ENCODE measurements at regions of chr2 and their contacts with region 1.

Region 1: DNA sequence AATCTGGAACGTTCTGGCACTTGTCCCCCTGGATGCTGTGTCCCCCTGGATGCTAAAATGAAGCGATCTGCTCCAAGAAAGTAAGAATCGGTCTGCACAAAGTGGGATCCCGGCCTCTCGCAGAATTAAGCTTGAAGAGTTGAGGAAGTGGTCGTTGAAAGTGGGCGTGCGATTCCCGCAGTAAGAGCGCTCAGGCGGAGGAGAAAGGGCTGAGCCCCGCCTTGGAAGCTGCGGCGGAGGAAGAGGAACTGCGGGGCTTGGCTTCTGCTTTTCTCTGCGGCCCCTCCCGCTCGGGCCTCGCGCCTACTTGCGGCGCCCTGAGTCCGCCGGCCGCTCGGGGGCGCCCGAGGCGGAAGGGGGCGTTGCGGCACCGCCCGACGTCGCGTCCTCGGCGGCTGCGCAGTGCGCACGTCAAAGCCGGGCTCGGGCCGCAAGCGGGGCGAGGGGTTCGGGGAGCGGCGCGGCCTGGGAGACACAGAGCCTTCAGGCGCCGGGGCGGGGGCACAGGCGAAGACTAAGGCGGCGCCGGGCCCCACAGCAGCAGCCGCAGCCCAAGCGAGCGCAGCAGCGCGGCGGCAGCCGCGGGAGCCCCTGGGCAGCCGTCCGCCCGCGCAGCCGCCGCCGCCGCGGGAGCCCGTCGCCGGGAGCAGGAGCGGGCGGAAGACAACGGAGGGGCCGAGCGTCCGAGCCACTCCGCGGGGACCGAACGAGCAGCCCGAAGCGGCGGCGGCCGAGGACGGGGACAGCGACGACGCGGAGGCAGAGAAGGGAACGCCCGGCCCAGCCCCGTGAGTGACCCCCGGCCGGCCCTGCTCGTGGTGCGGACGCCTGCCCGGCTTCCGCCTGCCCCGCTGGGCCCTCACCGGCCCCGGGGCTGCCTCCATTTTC is at the start of gene CAB39:
- DNase-seq: peak; percentile 86
- H3K4me3 Mint-ChIP-seq: peak within 1 kb of the TSS; percentile 82
- H3K27ac Mint-ChIP-seq: peak within 1 kb of the TSS; percentile 81
- H3K4me1 Mint-ChIP-seq: peaks cover 22% of the 10 kb centered on the region
- H3K27me3 Mint-ChIP-seq: no peaks in the 10 kb centered on the region
- CTCF ChIP-seq: peak; percentile 43
- total RNA-seq, gene CAB39: 76.9 and 91.7 TPM in 2 replicates

Region 2: GRCh38 chr2:230394301-230394700 is 318.4 kb before region 1 on chr2:
- CTCF ChIA-PET with region 1: no interaction called
- POLR2A ChIA-PET with region 1: no interaction called
- intact Hi-C with region 1: no loop called
- DNase-seq: no peak
- H3K4me3 Mint-ChIP-seq: no peak overlapping the region
- H3K27ac Mint-ChIP-seq: no peak overlapping the region
- H3K4me1 Mint-ChIP-seq: no peaks in the 10 kb centered on the region
- H3K27me3 Mint-ChIP-seq: no peaks in the 10 kb centered on the region
- CTCF ChIP-seq: no peak

Region 3: GRCh38 chr2:230614913-230615332 is 97.8 kb before region 1 on chr2:
- CTCF ChIA-PET with region 1: interaction called, 4 read pairs
- POLR2A ChIA-PET with region 1: interaction called, 16 read pairs
- intact Hi-C with region 1: loop called (anchors 2 kb)
- DNase-seq: peak; percentile 58
- H3K4me3 Mint-ChIP-seq: no peak overlapping the region
- H3K27ac Mint-ChIP-seq: no peak overlapping the region
- H3K4me1 Mint-ChIP-seq: peaks cover 7% of the 10 kb centered on the region
- H3K27me3 Mint-ChIP-seq: no peaks in the 10 kb centered on the region
- CTCF ChIP-seq: no peak

Region 4: DNA sequence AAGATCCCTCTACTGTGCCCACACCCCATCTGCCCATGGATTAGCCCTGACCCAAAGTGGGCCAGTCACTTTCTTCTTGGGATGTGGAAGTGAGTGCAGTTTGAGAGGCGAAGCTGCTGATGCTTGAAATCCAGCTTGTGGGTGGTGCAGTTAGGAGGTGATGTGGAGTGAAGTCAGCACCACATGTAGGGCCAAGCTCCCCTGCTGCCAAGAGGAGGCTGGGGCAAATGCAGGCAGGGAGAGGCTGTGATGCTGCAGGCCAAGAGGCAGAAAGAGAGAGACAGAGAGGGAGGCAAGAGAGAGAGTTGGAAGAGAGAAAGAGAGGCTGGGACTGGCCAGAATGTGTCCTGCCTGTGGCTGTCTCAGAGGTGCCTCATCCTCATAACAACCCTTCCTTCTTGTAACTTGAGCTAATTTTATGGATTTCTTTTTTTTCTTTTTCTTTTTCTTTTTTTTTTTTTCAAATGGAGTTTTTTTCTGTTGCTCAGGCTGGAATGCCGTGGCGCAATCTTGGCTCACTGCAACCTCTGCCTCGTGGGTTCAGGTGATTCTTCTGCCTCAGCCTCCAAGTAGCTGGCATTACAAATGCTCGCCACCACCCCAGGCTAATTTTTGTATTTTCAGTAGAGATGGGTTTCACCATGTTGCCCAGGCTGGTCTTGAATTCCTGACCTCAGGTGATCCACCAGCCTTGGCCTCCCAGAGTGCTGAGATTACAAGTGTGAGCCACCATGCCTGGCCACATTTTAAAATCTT is 35.3 kb before region 1 on chr2:
- CTCF ChIA-PET with region 1: no interaction called
- POLR2A ChIA-PET with region 1: interaction called, 19 read pairs
- intact Hi-C with region 1: no loop called
- DNase-seq: peak; percentile 53
- H3K4me3 Mint-ChIP-seq: no peak overlapping the region
- H3K27ac Mint-ChIP-seq: peak overlapping the region; percentile 10
- H3K4me1 Mint-ChIP-seq: peaks cover 24% of the 10 kb centered on the region
- H3K27me3 Mint-ChIP-seq: no peaks in the 10 kb centered on the region
- CTCF ChIP-seq: no peak

Region 5: GRCh38 chr2:230737791-230738226 is 25.1 kb after region 1 on chr2:
- CTCF ChIA-PET with region 1: interaction called, 7 read pairs
- POLR2A ChIA-PET with region 1: interaction called, 16 read pairs
- intact Hi-C with region 1: no loop called
- DNase-seq: no peak
- H3K4me3 Mint-ChIP-seq: no peak overlapping the region
- H3K27ac Mint-ChIP-seq: peak overlapping the region; percentile 76
- H3K4me1 Mint-ChIP-seq: peaks cover 33% of the 10 kb centered on the region
- H3K27me3 Mint-ChIP-seq: no peaks in the 10 kb centered on the region
- CTCF ChIP-seq: no peak

Region 6: DNA sequence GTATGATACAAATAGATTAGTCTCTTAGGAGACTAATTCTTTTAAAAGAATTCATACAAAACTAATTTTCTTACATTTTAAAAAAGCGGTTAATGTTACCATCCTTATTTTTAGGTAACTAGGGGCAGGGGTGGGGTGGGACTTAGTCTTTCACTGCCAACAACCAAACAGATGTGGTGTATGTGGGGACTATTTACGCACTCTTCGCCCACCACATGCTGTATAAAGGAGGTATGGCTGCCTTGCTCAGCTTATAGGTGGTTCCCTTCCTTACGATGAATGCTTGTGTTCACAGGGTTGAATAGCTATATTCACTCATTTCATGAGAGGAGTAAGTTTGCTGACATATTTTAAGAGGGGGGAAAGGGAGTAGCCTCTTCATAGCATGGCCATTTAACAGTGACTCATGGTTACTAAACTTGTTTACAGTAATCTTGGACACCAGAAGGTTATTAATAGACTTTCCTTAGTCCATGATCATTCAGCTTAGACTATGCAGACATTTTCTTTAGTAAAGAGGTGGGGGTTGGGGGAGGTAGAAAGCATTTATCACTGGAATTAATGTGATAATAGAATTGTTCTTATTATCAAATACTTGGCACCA is 61.8 kb after region 1 on chr2:
- CTCF ChIA-PET with region 1: interaction called, 16 read pairs
- POLR2A ChIA-PET with region 1: interaction called, 138 read pairs
- intact Hi-C with region 1: no loop called
- DNase-seq: peak; percentile 75
- H3K4me3 Mint-ChIP-seq: peak overlapping the region; percentile 13
- H3K27ac Mint-ChIP-seq: peak overlapping the region; percentile 87
- H3K4me1 Mint-ChIP-seq: peaks cover 47% of the 10 kb centered on the region
- H3K27me3 Mint-ChIP-seq: no peaks in the 10 kb centered on the region
- CTCF ChIP-seq: no peak

Region 7: GRCh38 chr2:230793572-230794359 is 81.1 kb after region 1 on chr2:
- CTCF ChIA-PET with region 1: interaction called, 21 read pairs
- POLR2A ChIA-PET with region 1: interaction called, 183 read pairs
- intact Hi-C with region 1: loop called (anchors 1 kb)
- DNase-seq: peak; percentile 99
- H3K4me3 Mint-ChIP-seq: peak overlapping the region; percentile 66
- H3K27ac Mint-ChIP-seq: no peak overlapping the region
- H3K4me1 Mint-ChIP-seq: peaks cover 20% of the 10 kb centered on the region
- H3K27me3 Mint-ChIP-seq: no peaks in the 10 kb centered on the region
- CTCF ChIP-seq: no peak

Region 8: DNA sequence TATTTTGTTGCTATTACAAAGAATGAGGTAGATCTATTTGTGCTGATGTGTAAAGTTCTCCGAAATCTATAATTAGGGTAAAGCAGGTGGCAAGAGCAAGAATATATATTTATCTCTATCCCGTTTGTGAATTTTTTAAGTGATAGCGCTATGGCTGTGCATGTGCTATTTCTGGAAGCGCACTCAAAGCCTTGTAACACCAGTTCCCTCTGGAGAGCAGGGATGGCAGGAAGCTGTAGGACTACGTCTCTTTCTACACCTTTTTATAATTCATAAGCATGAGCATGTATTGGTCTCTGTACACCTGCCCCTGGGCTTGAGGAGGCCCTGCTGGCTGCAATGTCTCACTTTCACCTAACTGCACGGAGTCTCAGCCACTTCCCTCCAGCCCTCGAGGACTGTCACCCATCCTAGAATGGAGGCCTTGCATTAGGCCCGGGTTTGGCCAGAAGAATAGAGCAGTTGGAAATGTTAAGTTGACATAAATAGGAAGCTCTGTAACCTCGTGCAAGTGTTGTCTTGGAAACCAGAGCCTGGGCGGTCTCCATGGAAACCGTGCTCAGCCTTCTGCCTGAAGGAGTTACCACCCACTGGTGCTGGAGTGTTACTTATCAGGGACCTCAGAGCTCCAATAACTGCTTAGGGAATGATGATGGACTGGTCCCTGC is 172.9 kb after region 1 on chr2:
- CTCF ChIA-PET with region 1: no interaction called
- POLR2A ChIA-PET with region 1: no interaction called
- intact Hi-C with region 1: no loop called
- DNase-seq: no peak
- H3K4me3 Mint-ChIP-seq: no peak overlapping the region
- H3K27ac Mint-ChIP-seq: no peak overlapping the region
- H3K4me1 Mint-ChIP-seq: no peaks in the 10 kb centered on the region
- H3K27me3 Mint-ChIP-seq: no peaks in the 10 kb centered on the region
- CTCF ChIP-seq: no peak

Region 9: GRCh38 chr2:230913406-230914143 is 200.9 kb after region 1 on chr2:
- CTCF ChIA-PET with region 1: no interaction called
- POLR2A ChIA-PET with region 1: no interaction called
- intact Hi-C with region 1: no loop called
- DNase-seq: peak; percentile 32
- H3K4me3 Mint-ChIP-seq: no peak overlapping the region
- H3K27ac Mint-ChIP-seq: no peak overlapping the region
- H3K4me1 Mint-ChIP-seq: peaks cover 9% of the 10 kb centered on the region
- H3K27me3 Mint-ChIP-seq: peaks cover 52% of the 10 kb centered on the region
- CTCF ChIP-seq: peak; percentile 20

Region 10: GRCh38 chr2:231378026-231378722 is 665.5 kb after region 1 on chr2:
- CTCF ChIA-PET with region 1: no interaction called
- POLR2A ChIA-PET with region 1: no interaction called
- intact Hi-C with region 1: no loop called
- DNase-seq: peak; percentile 34
- H3K4me3 Mint-ChIP-seq: no peak overlapping the region
- H3K27ac Mint-ChIP-seq: peak overlapping the region; percentile 75
- H3K4me1 Mint-ChIP-seq: peaks cover 12% of the 10 kb centered on the region
- H3K27me3 Mint-ChIP-seq: no peaks in the 10 kb centered on the region
- CTCF ChIP-seq: no peak

Measured in MCF 10A (cell line).